Activated T-helper 2 cell treated with anti-CD3 and anti-CD28 coated beads, Interferon-gamma antibody, Interleukin-2, Interleukin-4, amounts not matched to agents 10 μg/mL and 5 μg/mL and 100 μg/mL, durations not matched to agents 14 hours and 24 hours and 36 hours (primary cell): ENCODE measurements at regions of chr4 and their contacts with region 1.

Region 1: DNA sequence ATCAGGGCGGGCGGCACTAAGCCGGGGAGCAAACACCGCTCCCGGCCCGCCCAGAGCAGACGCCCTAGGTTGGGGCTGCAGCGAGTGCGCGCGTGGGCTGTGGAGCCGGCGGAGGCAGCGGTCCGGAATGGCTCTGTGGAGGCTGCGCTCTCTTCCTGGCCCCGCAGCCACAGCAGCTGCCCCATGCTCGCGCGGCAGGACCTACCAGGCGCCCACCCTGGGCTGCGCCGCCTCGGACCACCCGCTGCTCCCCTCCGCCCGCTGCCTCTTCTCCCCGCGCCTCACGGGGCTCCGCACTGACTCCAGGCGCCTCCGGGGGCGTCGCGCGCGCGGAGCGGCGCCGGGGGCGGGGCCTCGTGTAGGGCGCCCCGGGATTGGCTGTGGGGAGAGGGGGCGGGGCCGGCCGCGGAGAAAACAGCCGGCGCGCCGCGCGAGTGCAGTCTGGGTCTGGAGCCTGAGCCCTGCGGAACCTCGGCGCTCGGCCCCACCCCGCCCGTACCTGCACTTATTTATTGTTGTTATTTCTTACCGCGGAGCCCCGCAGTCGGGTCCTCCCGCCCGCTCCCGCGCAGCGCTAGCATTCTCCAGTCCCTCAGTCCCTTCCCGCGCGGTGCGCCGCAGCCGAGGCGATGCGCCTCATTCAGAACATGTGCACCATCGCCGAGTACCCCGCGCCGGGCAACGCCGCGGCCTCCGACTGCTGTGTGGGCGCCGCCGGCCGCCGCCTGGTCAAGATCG is at the start of gene RASL11B:
- DNase-seq: peak; percentile 77
- H3K4me3 Mint-ChIP-seq: peak within 1 kb of the TSS; percentile 74
- H3K27ac Mint-ChIP-seq: no peak within 1 kb of the TSS
- H3K4me1 Mint-ChIP-seq: peaks cover 5% of the 10 kb centered on the region
- H3K27me3 Mint-ChIP-seq: peaks cover 24% of the 10 kb centered on the region
- total RNA-seq, gene RASL11B: 0.50 and 0.67 TPM in 2 replicates

Region 2: DNA sequence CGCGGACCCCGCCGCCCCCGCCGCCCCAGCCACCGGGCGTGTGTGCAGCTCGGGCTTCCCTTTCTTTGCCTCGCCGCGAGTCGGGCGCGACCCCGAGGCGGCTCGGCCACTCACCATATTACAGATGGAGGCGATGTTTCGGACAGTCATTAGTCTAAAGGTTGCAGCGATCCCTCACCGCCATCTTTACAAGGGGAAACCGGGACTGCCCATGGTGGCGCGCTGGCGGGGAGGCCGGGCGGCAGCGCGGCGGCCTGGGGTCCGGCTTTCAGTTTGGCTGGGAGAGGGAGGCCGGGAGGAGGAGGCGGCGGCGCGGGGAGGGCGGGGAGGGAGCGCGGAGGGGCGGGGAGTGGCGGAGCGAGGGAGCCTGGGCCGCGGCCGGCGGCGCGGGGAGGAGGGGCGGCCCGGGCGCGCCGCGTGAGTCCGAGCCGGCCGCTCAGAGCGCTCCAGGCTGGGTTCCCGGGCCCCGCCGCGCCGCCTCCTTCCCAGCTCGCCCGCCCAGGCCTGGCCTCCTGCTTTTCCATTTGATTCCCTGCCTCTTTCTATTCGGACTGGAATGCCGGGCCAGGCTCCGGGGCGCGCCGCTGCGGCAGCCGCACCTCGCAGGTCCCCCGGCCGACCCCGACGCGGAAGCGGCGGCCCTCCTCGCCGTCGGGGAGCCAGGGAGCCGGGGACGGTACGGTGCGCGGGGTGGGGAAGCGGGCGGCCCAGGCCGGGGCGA is 202.9 kb before region 1 on chr4 and contains the start of gene USP46:
- intact Hi-C with region 1: loop called (anchors 1 kb)
- DNase-seq: peak; percentile 28
- H3K4me3 Mint-ChIP-seq: peak within 1 kb of the TSS; percentile 82
- H3K27ac Mint-ChIP-seq: peak within 1 kb of the TSS; percentile 62
- H3K4me1 Mint-ChIP-seq: peaks cover 15% of the 10 kb centered on the region
- H3K27me3 Mint-ChIP-seq: peaks cover 10% of the 10 kb centered on the region
- total RNA-seq, gene USP46: 7.7 and 8.9 TPM in 2 replicates

Region 3: DNA sequence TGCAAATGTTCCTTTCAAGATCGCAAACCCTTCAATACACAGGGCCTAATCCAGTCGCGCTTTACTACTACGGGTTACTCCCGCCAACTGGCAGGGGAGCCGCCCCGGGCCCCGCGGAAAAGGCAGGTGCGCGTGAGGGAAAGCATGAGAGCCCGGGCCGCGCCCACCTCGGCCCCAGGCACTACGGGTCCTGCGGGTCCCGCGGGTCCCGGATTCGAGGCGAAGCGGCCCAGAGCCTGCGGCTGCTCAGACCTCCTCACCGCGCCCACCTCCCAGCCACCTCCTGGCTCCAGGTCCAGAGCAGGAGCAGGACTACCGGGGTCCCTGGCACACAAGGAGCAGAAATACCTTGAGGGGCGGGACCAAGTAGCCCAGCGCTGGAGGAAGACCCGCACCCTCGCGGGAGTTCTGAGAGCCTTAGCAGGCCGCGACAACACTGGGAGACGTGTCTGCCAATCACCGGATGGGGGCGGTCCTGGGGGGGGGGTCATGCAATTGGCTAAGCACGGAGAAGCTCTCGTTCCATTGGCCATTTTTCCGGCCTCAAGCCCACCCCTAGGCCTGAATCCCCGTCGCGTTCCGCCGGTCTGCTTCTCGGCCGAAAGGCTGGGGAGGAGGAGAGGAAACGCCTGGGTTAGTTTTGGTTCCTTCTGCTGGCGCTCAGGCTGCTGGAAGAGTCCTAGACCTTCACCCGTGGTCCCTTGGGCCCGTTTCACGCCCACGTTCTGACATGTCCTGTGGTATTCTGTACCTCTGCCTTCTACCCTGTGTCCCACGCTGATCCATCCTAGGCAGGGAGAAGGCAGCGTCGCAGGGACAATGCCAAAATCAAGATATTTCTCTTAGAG is 139.9 kb before region 1 on chr4:
- intact Hi-C with region 1: loop called (anchors 2 kb)
- DNase-seq: peak; percentile 83
- H3K4me3 Mint-ChIP-seq: peak overlapping the region; percentile 72
- H3K27ac Mint-ChIP-seq: peak overlapping the region; percentile 56
- H3K4me1 Mint-ChIP-seq: peaks cover 9% of the 10 kb centered on the region
- H3K27me3 Mint-ChIP-seq: peaks cover 4% of the 10 kb centered on the region

Region 4: DNA sequence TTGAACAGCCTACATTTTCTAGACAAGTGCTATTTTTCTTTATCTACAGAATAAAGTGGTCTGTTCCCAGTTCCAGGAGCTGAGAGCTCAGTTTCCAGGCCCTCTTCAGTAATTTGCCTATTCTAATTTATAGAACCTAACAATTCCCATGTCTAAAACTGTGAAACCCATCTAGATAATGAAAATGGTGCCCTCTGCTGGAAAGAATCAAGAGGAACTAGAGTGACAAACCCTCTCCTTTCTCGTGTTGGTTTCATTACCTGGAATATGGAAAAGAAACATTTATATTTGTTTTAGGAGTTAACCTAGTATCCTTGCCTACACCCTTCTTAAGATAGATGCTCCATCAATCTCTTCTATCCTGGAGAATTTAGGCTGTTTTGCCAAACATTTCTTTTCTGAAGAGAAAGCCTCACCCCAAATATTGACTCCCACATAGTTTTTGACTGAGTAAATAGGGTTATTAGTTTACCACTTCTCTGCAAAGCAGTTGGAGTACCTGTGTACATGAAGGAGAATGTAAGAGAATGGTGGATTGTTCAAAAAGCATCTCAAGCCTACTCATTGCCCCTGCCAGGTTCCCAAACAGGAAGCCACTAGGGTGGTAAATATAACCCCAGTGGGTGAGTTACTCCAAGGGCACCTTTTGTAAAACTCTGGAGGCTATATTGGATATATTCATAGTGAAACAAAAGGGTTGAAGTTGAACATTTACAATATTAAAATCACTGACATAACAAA is 121.7 kb after region 1 on chr4:
- intact Hi-C with region 1: no loop called
- DNase-seq: no peak
- H3K4me3 Mint-ChIP-seq: no peak overlapping the region
- H3K27ac Mint-ChIP-seq: no peak overlapping the region
- H3K4me1 Mint-ChIP-seq: peaks cover 3% of the 10 kb centered on the region
- H3K27me3 Mint-ChIP-seq: no peaks in the 10 kb centered on the region